Activated CD4-positive, alpha-beta T cell treated with anti-CD3 and anti-CD28 coated beads, Interleukin-2, amount 10 ng/mL, durations not matched to agents 7 days and 5 days (primary cell): ENCODE measurements at regions of chr6 and their contacts with region 1.

Region 1: DNA sequence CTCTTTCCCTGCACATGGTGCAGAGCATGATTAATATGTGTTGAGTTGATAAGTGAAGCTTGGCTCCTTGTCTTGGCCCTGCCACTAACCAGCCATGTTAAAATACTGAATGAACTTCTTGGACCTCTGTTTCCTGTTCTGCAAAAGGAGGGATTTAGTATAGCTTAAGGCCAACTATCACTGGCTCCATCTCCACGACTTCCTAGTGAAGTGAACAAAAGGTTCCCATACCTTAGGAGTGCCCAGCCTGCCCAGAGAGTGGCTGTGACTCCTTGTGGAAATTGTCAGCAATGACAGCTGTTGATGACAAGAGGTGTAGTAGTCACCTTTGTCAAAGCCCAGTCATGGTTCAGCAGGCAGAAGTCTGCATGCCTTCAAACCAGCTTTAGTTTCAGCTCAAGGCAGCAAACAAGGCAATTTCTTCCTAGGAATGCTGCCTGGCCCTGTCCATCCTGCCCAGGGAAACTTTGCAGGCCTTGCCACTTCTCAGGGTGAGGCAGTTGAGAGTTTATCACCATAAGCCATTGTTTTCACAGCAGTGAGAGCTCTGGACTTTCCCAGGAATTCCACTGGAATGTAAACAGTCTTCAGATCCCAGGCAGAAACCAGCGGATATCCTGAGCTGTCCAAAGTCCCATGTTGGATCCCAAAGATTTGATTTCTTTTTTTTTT is 169.7 kb upstream of the TNFAIP3 start:
- DNase-seq: no peak
- H3K4me3 Mint-ChIP-seq: no peak overlapping the region
- H3K27ac Mint-ChIP-seq: no peak overlapping the region
- H3K4me1 Mint-ChIP-seq: peaks cover 27% of the 10 kb centered on the region
- H3K27me3 Mint-ChIP-seq: no peaks in the 10 kb centered on the region

Region 2: DNA sequence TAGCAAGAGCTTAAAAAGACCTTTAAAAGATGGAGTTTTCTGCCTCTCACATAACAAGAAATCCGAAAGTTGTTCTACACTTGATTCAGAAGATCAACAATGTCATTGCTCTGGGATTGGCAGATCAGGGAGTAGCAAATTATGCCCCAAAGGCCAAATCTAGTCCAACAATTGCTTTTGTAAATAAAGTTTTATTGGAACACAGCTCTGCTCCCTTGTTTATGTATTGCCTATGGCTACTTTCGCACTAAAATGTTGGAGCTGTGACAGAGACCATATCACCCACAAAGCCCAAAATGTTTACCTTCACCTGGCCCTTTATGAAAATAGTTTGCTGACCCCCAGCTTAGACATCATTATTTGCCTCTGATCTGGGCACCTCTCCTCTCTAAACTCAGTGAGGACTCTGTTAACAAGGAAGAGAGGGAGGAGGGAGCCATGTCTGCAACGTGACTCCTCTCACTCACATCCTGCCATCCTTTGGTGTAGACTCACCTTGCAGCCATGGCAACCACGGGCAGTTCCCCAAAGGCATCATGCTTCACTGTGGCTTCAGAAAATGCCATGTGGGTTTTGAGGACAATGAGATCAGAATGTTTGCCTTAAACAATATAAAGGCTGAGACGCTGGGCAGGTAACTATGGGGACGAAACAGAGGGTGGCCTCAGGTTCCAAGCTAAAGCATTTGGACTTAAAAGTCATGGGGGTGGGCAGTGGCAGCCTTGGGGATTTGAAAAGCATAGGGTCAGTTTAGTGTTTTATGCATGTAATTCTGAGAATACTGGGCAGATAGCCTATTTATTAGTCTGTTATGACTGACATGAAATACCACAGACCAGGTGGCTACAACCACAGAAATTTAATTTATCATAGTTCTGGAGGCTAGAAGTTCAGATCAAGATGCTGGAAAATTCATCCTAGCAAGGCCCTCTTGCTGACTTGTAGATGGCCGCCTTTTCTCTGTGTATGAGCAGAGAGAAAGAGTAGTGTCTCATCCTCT is 20.0 kb after region 1 on chr6:
- CTCF ChIA-PET with region 1: interaction called, 10 read pairs
- POLR2A ChIA-PET with region 1: no interaction called
- DNase-seq: peak; percentile 87
- H3K4me3 Mint-ChIP-seq: no peak overlapping the region
- H3K27ac Mint-ChIP-seq: peak overlapping the region; percentile 89
- H3K4me1 Mint-ChIP-seq: peaks cover 52% of the 10 kb centered on the region
- H3K27me3 Mint-ChIP-seq: no peaks in the 10 kb centered on the region

Region 3: DNA sequence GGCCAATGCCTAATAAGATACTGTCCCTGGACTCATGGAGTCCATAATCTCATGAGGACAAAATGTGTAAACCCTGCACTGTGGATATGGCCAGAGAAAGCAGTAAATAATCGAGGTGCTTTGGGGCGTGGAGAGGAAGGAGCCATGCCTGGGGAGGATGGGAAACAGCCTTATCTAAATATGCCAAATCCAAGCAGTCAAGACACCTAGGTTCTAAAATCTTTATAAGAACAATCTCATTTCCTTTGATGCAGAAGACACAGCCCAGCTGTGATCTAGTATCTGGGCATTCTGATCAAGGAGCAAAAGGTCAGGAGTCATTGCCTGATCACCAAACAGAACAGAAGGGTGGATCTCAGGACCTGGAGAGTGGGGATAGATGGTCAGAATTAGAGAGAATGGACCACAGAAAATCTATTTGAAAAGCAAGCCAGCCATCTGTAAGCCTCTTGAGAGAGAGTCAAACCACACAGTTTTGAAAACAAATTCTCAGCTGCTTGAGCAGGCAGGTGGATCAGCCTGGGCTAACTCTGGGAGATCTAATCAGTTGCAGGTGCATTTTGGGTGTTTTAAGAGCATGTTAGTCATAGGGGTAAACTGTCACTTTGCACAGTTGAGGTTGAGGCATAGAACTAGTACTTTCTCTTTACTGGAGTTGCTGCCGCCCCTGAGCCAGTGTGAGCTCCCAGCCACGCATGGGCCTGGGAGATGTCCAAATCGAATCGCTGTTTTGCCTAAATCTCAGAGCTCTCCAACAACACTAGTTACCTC is 38.8 kb after region 1 on chr6:
- CTCF ChIA-PET with region 1: no interaction called
- POLR2A ChIA-PET with region 1: no interaction called
- DNase-seq: peak; percentile 35
- H3K4me3 Mint-ChIP-seq: no peak overlapping the region
- H3K27ac Mint-ChIP-seq: peak overlapping the region; percentile 77
- H3K4me1 Mint-ChIP-seq: peaks cover 14% of the 10 kb centered on the region
- H3K27me3 Mint-ChIP-seq: peaks cover 2% of the 10 kb centered on the region

Region 4: GRCh38 chr6:137975188-137975940 is 278.0 kb after region 1 on chr6:
- CTCF ChIA-PET with region 1: interaction called, 10 read pairs
- POLR2A ChIA-PET with region 1: no interaction called
- DNase-seq: peak; percentile 52
- H3K4me3 Mint-ChIP-seq: peak overlapping the region; percentile 68
- H3K27ac Mint-ChIP-seq: peak overlapping the region; percentile 92
- H3K4me1 Mint-ChIP-seq: peaks cover 48% of the 10 kb centered on the region
- H3K27me3 Mint-ChIP-seq: no peaks in the 10 kb centered on the region